Activated T-helper 1 cell treated with anti-CD3 and anti-CD28 coated beads, Interleukin-12 subunit alpha, Interleukin-12 subunit beta, Interleukin-2, Interleukin-4 antibody, amounts not matched to agents 30 ng/mL and 10 ng/mL and 1 ng/mL, durations not matched to agents 14 hours and 24 hours and 36 hours (primary cell): ENCODE measurements at regions of chr15 and their contacts with region 1.

Region 1: DNA sequence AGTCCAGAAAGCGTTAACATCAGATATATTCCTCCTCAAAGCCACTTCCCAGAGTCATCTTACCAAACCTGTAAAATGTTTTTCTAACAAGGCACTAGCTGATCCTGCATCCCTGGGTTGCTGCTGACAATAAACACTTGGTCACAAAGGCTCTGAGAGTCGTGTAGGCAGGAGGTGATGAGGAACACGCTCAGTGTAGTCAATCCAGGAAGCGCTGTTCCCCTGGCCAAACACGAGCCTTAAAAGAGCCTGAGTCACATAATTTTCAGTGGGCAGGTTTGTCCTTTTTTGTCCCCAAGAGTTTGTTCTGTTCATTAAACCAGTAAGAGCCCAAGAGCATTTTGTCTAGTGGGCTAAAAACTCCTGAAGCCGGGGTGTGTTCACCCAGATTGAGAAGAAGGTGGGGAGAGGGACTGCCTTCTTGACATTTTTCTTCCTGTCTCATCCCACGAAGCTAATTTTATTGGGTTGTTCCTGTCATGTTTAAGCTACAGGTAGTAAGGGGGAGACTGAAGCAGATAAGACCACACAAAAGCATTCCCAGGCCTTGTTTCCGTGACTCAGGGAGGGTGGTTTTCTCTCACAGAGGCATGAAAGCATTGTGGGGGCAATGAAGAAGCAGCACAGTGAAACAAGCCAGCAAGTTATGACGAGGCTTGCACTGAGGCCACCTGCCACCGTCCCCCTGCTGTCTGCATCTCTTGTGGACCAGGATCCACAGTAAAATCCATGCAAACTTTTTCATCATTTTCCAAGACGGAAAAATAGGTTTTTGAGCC is 73.7 kb downstream of the FOXB1 start:
- DNase-seq: peak; percentile 3
- H3K4me3 Mint-ChIP-seq: peak overlapping the region; percentile 4
- H3K27ac Mint-ChIP-seq: peak overlapping the region; percentile 75
- H3K4me1 Mint-ChIP-seq: peaks cover 49% of the 10 kb centered on the region
- H3K27me3 Mint-ChIP-seq: peaks cover 2% of the 10 kb centered on the region

Region 2: DNA sequence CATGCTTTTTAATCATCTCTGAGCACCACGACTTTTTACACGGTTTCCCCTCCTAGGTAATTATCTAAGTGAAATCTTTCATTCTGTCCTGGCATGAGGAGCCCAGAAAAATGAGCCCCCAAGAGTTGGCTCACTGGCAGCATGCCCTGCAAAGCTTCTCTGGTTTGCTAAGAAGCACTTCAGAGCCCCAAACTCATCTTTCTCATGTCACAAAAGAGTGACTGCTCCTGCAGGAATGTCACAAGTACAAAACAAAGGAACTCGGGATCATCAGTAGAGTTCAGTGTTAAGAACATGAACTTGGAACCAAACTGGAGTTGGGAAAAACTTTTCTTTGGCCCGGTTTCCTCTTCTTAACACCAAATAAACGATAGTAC is 50.2 kb after region 1 on chr15:
- intact Hi-C with region 1: loop called (anchors 2 kb)
- DNase-seq: no peak
- H3K4me3 Mint-ChIP-seq: peak overlapping the region; percentile 82
- H3K27ac Mint-ChIP-seq: peak overlapping the region; percentile 80
- H3K4me1 Mint-ChIP-seq: peaks cover 57% of the 10 kb centered on the region
- H3K27me3 Mint-ChIP-seq: peaks cover 11% of the 10 kb centered on the region